ENCODE measurements at regions of chr11 and their contacts with region 1.

Region 1: DNA sequence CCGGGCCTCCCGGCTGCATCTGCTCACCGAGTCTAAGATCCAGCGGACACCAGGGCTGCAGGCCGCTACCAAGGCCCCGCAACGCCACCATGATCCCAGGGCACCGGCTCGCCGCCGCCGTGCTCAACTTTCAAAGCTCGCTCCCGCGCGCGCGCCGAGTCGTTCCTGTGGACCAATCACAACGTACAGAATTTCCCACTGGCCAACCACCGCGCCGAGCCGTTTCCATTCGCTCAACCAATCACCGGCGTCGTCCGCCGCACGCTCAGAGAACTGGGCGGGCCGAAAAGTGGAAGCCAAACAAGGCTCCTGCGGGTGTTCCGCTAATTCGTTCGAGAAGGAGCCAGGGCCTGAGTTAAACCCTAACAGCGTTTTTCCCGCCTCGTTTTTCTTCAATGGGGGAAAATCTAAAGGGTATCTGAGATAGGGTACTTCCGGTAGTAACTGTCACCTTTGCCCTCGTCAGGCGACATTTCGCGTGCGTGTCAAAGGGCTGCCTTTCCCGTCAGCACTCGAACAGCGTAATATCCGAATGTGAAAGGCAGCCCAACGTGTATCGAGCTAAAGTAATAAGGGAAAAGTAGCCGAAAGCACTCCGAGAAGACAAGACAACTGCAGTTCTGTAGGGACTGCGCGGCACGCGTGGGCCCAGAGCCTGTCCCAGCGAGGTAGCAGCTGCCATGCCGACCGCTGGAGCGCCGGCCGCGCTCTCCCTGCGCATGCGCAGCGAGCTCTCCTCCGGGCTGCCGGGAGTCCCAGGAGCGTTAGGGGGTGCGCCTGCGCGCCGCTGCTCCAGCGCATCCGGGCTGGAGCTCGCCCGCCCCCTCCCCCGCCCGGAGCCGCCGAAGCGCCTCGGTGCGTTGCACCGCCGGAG is at the starts of genes NCAPD3 and VPS26B:
- DNase-seq: peak; percentile 98
- ATAC-seq: peak; percentile 84
- H3K4me3 Mint-ChIP-seq: peak within 1 kb of the TSS; percentile 96
- H3K27ac Mint-ChIP-seq: peak within 1 kb of the TSS; percentile 96
- H3K4me1 Mint-ChIP-seq: peaks cover 65% of the 10 kb centered on the region
- H3K27me3 Mint-ChIP-seq: no peaks in the 10 kb centered on the region
- total RNA-seq, gene NCAPD3: 123 to 143 TPM
- total RNA-seq, gene VPS26B: 52.6 to 69.8 TPM

Region 2: DNA sequence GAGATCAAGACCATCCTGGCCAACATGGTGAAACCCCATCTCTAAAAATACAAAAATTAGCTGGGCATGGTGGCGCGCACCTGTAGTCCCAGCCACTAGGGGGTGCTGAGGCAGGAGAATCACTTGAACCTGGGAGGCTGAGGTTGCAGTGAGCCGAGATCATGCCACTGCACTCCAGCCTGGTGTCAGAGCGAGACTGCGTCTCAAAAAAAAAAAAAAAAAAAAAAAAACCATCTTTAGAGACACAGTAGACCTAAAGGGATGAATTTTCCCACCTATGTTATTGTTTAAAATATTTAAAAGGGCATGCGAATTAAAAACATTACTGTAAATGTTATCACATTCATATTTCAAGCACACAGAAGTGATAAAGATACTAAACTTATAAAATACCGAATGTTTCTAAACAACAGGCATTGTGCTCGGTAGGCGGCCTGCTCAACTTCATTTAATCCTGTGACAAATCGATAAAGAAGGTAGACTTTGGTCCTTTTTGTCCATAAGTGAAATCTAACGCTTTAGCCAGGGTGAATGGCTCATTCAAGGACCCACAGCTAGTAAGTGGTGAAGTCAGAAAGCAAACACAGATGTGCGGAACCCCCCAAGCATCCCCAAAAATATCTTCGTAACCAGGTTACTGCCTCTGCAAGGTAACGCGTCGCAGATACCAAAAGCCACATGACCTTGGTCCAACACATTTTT is 16.4 kb before region 1 on chr11:
- CTCF ChIA-PET with region 1: interaction called, 11 read pairs
- DNase-seq: peak; percentile 74
- ATAC-seq: no peak
- H3K4me3 Mint-ChIP-seq: no peak overlapping the region
- H3K27ac Mint-ChIP-seq: no peak overlapping the region
- H3K4me1 Mint-ChIP-seq: peaks cover 14% of the 10 kb centered on the region
- H3K27me3 Mint-ChIP-seq: no peaks in the 10 kb centered on the region

Region 3: DNA sequence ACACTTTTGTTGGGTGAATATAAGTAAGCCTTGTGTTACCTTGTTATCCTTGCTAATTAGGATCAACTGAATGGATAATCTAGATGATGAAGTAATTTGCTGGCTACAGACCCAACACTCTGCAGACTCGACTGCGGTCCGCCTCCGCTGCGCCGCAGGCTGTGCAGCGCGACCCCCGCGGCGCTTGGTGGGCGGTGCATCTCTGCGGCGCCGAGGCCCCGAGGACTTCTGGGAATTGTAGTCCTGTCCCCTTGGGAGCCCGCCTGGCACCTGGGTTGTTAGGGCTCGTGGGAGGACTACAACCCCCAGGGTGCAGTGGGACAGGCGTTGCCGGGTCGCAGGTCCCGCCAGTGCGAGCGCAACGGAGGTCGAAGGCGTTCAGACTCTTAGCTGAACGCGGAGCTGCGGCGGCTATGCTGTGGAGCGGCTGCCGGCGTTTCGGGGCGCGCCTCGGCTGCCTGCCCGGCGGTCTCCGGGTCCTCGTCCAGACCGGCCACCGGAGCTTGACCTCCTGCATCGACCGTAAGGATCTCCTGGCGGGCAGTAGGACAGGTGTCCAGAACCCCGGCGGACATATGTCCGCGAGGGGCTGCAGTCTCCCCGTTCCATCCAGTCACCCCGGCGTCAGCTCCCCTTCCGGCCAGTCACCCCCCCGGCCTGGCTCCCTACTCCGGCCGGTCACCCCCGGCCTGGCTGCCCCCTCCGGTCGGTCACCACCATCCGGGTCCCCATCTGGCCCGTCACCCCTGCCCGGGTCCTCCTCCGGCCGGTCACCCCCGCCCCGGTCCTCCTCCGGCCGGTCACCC is 29.3 kb after region 1 on chr11 and contains the starts of genes ACAD8 and THYN1:
- CTCF ChIA-PET with region 1: interaction called, 21 read pairs
- DNase-seq: peak; percentile 98
- ATAC-seq: peak; percentile 99
- H3K4me3 Mint-ChIP-seq: peak within 1 kb of the TSS; percentile 94
- H3K27ac Mint-ChIP-seq: peak within 1 kb of the TSS; percentile 85
- H3K4me1 Mint-ChIP-seq: peaks cover 43% of the 10 kb centered on the region
- H3K27me3 Mint-ChIP-seq: no peaks in the 10 kb centered on the region
- total RNA-seq, gene ACAD8: 29.4 to 31.6 TPM
- total RNA-seq, gene THYN1: 69.3 to 71.1 TPM

Region 4: GRCh38 chr11:134261626-134262488 is 37.8 kb after region 1 on chr11:
- CTCF ChIA-PET with region 1: interaction called, 13 read pairs
- DNase-seq: peak; percentile 56
- ATAC-seq: peak; percentile 79
- H3K4me3 Mint-ChIP-seq: no peak overlapping the region
- H3K27ac Mint-ChIP-seq: no peak overlapping the region
- H3K4me1 Mint-ChIP-seq: peaks cover 18% of the 10 kb centered on the region
- H3K27me3 Mint-ChIP-seq: no peaks in the 10 kb centered on the region

Region 5: DNA sequence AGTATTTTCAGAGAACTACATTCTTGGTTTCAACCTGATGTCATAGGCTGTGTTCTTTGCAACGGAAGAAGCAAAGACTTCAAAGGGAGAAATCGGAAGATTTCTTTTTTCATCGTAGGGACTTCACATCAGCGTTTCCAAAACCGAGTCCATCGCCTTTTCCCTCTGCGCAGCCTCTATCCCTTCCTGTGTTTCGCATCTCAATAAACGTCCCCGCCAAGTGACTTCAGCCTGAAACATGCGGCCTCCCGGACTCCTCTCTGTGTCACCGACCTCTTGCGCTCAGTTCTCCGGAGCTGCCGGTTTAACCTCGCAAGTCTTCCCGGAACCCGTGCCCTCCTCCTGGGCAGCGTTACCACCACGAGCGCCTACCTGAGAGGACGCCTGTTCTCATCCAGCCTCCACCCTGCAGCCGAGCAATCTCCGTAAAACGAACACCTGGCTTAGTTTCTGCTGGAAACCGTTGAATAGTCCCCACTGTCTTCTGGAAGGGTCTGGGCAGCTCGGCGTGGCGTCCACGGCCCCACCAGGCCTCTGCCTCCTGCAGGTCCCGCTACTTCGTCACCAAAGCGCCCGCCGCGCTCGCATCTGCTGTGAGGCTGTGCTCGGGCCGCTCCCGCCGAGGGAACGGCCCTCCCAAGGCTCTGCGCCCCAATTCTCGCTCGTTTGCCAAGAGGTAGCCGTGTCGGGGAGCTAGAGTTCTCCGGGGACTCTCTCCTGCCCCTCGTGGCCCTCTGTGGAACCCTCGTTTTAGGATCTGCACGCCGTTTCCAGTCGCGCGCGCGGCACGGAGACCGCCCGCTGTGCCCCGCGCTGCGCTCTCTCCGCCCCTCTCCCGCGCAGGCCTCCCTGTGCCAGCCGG is 51.7 kb after region 1 on chr11 and contains the start of gene GLB1L3:
- CTCF ChIA-PET with region 1: interaction called, 29 read pairs
- DNase-seq: peak; percentile 90
- ATAC-seq: peak; percentile 93
- H3K4me3 Mint-ChIP-seq: peak within 1 kb of the TSS; percentile 96
- H3K27ac Mint-ChIP-seq: peak within 1 kb of the TSS; percentile 93
- H3K4me1 Mint-ChIP-seq: peaks cover 49% of the 10 kb centered on the region
- H3K27me3 Mint-ChIP-seq: peaks cover 4% of the 10 kb centered on the region
- total RNA-seq, gene GLB1L3: 4.1 to 6.1 TPM

Region 6: DNA sequence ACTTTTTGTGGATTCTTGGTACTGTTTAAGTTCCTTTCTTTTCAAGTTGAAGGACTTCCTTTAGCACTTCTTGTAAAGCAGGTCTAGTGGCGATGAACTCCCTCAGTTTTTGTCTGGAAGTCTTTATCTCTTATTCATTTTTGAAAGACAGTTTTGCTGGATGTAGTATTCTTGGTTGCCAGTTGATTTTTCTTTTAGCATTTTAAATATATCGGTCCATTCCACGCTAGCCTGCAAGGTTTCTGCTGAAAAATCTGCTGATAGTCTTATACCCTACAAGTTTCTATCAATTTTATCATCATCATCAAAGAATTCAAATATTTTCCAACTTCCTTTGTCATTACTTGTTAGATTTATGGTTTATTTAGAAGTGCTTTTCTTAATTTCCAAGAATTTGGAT is 93.0 kb after region 1 on chr11:
- CTCF ChIA-PET with region 1: no interaction called
- DNase-seq: no peak
- ATAC-seq: no peak
- H3K4me3 Mint-ChIP-seq: no peak overlapping the region
- H3K27ac Mint-ChIP-seq: no peak overlapping the region
- H3K4me1 Mint-ChIP-seq: no peaks in the 10 kb centered on the region
- H3K27me3 Mint-ChIP-seq: peaks cover 2% of the 10 kb centered on the region

Measured in activated CD8-positive, alpha-beta memory T cell treated with anti-CD3 and anti-CD28 coated beads, Interleukin-2, amount 10 ng/mL, durations not matched to agents 7 days and 5 days (primary cell).